WTC11 (cell line): ENCODE measurements at regions of chr6 and their contacts with region 1.

Region 1: DNA sequence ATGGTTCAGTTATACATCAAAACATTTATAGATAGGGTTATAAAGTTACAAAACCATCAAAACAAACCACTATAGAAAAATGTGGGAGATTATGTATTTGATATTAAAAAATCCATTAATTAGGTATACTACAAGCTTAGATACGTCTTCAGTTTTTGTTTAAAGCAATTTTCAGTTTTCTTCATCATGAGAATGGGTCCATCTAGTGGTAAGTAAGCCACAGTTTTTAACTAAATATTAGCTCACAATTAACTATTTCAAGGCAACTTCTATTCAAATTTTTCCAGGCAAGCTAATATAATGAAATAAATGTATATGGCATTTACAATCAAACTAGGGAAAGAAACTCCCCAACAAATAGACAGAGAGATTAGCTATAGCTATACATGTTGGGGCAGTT is 44.4 kb downstream of the RNGTT start:
- DNase-seq: no peak
- ATAC-seq: no peak
- H3K4me3 Mint-ChIP-seq: no peak overlapping the region
- H3K27ac Mint-ChIP-seq: no peak overlapping the region
- H3K4me1 Mint-ChIP-seq: peaks cover 10% of the 10 kb centered on the region
- H3K27me3 Mint-ChIP-seq: no peaks in the 10 kb centered on the region
- CTCF ChIP-seq: no peak

Region 2: GRCh38 chr6:88884361-88884760 is 34.7 kb before region 1 on chr6:
- CTCF ChIA-PET with region 1: no interaction called
- POLR2A ChIA-PET with region 1: no interaction called
- DNase-seq: no peak
- ATAC-seq: no peak
- H3K4me3 Mint-ChIP-seq: no peak overlapping the region
- H3K27ac Mint-ChIP-seq: no peak overlapping the region
- H3K4me1 Mint-ChIP-seq: peaks cover 12% of the 10 kb centered on the region
- H3K27me3 Mint-ChIP-seq: no peaks in the 10 kb centered on the region
- CTCF ChIP-seq: no peak

Region 3: GRCh38 chr6:88899569-88900316 is 19.3 kb before region 1 on chr6:
- CTCF ChIA-PET with region 1: interaction called, 45 read pairs
- POLR2A ChIA-PET with region 1: no interaction called
- DNase-seq: no peak
- ATAC-seq: peak; percentile 64
- H3K4me3 Mint-ChIP-seq: no peak overlapping the region
- H3K27ac Mint-ChIP-seq: no peak overlapping the region
- H3K4me1 Mint-ChIP-seq: no peaks in the 10 kb centered on the region
- H3K27me3 Mint-ChIP-seq: no peaks in the 10 kb centered on the region
- CTCF ChIP-seq: peak; percentile 17; the same call in 1 of the 2 replicates

Region 4: DNA sequence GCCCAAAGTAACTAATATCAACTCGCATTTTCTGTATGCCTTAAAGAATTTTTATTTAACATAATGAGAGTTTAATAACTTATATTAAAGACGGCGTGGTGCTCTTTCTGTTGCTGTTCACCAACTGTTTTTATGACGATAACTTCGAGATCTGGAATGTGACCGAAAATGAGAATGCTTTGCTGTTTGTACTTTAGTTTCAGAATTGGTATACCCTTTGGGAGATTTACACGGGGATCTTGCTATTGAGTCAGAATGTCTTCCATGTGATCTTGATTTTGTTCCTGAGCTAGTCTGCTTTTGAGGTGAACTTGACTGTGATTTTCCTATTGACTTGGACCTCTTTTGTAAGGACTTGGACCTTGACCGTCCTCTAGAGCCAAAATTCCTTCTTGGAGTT is 179.4 kb after region 1 on chr6:
- CTCF ChIA-PET with region 1: no interaction called
- POLR2A ChIA-PET with region 1: no interaction called
- DNase-seq: no peak
- ATAC-seq: no peak
- H3K4me3 Mint-ChIP-seq: no peak overlapping the region
- H3K27ac Mint-ChIP-seq: no peak overlapping the region
- H3K4me1 Mint-ChIP-seq: no peaks in the 10 kb centered on the region
- H3K27me3 Mint-ChIP-seq: no peaks in the 10 kb centered on the region
- CTCF ChIP-seq: no peak